Calu3 (cell line): ENCODE measurements at regions of chr9 and their contacts with region 1.

Region 1: GRCh38 chr9:124617471-124618141 is 110.4 kb upstream of the NR5A1 start:
- DNase-seq: peak; percentile 79
- H3K4me3 Mint-ChIP-seq: peak overlapping the region; percentile 48
- H3K27ac Mint-ChIP-seq: peak overlapping the region; percentile 72
- H3K4me1 Mint-ChIP-seq: peaks cover 22% of the 10 kb centered on the region
- H3K27me3 Mint-ChIP-seq: no peaks in the 10 kb centered on the region
- CTCF ChIP-seq: peak; percentile 81

Region 2: DNA sequence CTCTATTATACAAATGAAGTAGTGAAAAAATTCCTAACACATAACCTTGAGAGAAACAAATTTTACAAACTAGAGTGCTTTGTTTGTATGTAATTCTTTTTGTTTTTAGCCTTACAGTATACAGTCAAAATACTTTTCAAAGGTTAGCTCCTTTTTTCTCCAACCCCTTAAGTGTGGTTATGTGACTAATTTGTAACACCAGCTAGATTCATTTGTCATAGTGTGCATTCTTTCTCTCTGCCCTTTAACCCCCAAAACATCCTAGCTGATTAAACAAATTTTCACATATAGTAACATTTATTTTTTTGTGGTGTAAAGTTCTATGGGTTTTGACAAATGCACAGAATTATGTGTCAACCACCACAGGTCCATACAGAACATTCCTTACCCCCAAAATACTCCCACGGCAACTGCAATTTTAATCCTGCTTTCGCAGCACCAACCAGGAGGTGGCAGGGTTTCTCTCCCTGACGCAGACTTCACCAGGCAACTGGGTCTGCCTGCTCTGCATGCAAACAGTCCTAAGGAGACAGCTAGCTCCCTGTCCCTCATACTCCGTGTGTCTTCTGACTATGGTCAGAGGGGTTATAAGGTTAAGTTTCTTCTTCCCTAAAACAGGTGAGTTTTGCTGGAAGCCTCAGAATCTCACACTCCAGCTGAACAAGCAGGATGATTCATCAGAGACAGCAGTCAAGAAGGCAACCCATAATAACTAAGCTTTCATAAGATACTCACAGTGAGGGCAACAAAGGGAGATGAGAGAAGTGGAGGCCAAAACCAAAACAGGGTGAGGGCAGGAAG is 65.9 kb before region 1 on chr9:
- CTCF ChIA-PET with region 1: interaction called, 18 read pairs
- intact Hi-C with region 1: loop called (anchors 2 kb)
- DNase-seq: peak; percentile 48
- H3K4me3 Mint-ChIP-seq: no peak overlapping the region
- H3K27ac Mint-ChIP-seq: no peak overlapping the region
- H3K4me1 Mint-ChIP-seq: no peaks in the 10 kb centered on the region
- H3K27me3 Mint-ChIP-seq: no peaks in the 10 kb centered on the region
- CTCF ChIP-seq: peak; percentile 50

Region 3: DNA sequence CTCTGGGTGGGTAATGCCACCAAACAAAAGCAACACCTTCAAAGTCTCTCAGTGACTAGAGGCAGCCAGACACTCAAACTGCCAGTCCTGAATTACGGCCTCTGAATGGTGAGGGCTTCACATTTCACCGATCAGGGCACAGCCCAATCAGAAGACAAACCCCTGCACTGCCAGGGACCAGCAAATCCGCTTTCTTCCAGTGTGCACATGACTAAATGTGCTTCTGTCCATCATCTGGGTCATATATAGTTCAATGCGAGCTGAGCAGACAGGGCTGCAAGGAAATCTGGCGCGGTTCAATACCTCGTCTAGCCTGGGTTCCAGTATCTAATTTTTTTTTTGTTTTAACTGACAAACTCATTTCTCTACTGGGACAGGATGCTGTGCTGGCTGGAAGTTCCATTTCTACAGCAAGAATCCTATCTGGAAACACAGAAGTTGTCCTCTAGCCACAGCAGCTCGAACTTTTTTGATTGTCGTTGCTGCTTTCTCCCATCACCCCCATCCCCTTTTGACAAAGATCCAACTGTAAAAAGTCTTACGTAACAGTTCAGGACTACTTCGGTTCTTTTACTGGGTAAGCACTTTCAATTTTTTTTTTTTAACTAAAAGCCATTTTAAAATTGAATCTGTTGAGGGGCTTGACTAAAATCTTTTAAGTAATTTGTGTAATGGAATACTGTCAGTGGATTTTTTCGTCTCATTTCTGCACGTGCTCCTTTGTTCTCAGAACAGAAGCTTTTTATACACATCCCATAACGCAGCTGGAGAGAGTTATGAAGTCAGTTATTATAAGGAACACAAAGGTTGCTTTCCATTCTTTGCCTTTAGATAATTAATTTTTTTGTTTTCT is 40.8 kb after region 1 on chr9:
- CTCF ChIA-PET with region 1: interaction called, 19 read pairs
- intact Hi-C with region 1: no loop called
- DNase-seq: peak; percentile 78
- H3K4me3 Mint-ChIP-seq: peak overlapping the region; percentile 85
- H3K27ac Mint-ChIP-seq: peak overlapping the region; percentile 99
- H3K4me1 Mint-ChIP-seq: peaks cover 9% of the 10 kb centered on the region
- H3K27me3 Mint-ChIP-seq: no peaks in the 10 kb centered on the region
- CTCF ChIP-seq: no peak

Region 4: DNA sequence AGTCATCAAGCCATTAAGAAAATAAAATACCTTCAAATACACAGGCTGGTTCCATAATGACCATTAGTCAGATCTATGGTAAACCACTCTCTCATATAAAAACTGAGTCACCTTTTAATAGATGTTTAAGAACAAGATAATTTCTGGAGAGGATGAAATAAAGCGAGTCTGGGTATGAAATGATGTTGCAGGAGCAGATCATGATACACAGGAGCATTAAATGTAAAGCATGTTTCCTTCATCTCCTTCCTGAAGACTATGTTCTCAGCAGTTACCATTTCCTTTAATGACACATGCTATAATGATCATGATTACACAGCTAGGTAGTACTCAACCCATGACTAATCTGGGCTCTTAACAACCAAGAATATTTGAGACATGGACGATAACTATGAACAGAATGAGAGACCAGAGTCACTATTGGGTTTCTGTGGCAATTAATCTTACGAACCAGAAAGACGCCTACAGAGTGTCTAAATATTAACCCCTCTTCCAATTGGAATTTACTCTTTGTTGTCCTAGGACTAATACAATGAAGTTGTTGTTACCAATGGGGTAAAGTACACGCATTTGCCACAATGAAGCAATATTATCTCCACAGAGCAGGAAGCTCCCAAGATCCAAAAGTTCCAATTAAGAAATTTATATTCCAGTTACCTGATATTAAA is 47.9 kb after region 1 on chr9:
- CTCF ChIA-PET with region 1: interaction called, 10 read pairs
- intact Hi-C with region 1: loop called (anchors 2 kb)
- DNase-seq: peak; percentile 11
- H3K4me3 Mint-ChIP-seq: peak overlapping the region; percentile 9
- H3K27ac Mint-ChIP-seq: peak overlapping the region; percentile 77
- H3K4me1 Mint-ChIP-seq: peaks cover 14% of the 10 kb centered on the region
- H3K27me3 Mint-ChIP-seq: no peaks in the 10 kb centered on the region
- CTCF ChIP-seq: no peak

Region 5: DNA sequence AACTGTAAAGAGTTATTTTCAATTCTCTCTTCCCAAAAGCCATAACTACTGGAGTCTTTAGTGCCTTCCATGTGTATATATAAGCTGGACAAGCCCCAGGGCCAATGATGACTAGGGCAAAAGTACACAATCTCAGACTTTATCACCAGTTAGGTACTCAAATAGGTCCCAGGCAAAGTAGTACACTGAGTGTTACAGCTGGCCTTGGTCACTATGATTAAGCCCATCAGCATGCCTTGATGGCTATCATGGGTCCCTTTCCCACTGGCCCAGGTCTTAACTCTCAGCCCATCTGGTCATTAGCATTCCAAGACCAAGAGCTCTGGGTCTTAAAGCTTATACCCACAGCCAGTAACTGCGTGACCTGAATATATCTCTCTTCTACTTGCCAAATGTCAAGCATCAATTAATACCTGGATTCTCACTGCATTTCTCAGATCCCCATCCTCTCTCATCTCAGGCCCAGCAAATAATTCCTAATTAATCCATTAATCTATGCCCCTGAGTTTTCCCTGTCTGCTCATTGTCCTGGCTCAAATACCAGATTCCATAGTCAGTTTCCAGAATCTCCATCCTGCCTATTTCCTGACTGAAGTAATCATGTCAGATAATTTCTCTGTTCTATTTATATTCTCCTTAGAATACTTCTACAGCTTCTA is 91.2 kb after region 1 on chr9:
- CTCF ChIA-PET with region 1: interaction called, 33 read pairs
- intact Hi-C with region 1: loop called (anchors 1 kb)
- DNase-seq: no peak
- H3K4me3 Mint-ChIP-seq: no peak overlapping the region
- H3K27ac Mint-ChIP-seq: no peak overlapping the region
- H3K4me1 Mint-ChIP-seq: peaks cover 44% of the 10 kb centered on the region
- H3K27me3 Mint-ChIP-seq: no peaks in the 10 kb centered on the region
- CTCF ChIP-seq: no peak

Region 6: GRCh38 chr9:124754289-124754688 is 136.7 kb after region 1 on chr9:
- CTCF ChIA-PET with region 1: no interaction called
- intact Hi-C with region 1: loop called (anchors 5 kb)
- DNase-seq: no peak
- H3K4me3 Mint-ChIP-seq: no peak overlapping the region
- H3K27ac Mint-ChIP-seq: no peak overlapping the region
- H3K4me1 Mint-ChIP-seq: peaks cover 34% of the 10 kb centered on the region
- H3K27me3 Mint-ChIP-seq: no peaks in the 10 kb centered on the region
- CTCF ChIP-seq: no peak

Region 7: GRCh38 chr9:124764774-124765438 is 147.3 kb after region 1 on chr9:
- CTCF ChIA-PET with region 1: interaction called, 6 read pairs
- intact Hi-C with region 1: loop called (anchors 5 kb)
- DNase-seq: no peak
- H3K4me3 Mint-ChIP-seq: no peak overlapping the region
- H3K27ac Mint-ChIP-seq: no peak overlapping the region
- H3K4me1 Mint-ChIP-seq: peaks cover 20% of the 10 kb centered on the region
- H3K27me3 Mint-ChIP-seq: no peaks in the 10 kb centered on the region
- CTCF ChIP-seq: no peak